ENCODE measurements at regions of chr21 and their contacts with region 1.

Region 1: DNA sequence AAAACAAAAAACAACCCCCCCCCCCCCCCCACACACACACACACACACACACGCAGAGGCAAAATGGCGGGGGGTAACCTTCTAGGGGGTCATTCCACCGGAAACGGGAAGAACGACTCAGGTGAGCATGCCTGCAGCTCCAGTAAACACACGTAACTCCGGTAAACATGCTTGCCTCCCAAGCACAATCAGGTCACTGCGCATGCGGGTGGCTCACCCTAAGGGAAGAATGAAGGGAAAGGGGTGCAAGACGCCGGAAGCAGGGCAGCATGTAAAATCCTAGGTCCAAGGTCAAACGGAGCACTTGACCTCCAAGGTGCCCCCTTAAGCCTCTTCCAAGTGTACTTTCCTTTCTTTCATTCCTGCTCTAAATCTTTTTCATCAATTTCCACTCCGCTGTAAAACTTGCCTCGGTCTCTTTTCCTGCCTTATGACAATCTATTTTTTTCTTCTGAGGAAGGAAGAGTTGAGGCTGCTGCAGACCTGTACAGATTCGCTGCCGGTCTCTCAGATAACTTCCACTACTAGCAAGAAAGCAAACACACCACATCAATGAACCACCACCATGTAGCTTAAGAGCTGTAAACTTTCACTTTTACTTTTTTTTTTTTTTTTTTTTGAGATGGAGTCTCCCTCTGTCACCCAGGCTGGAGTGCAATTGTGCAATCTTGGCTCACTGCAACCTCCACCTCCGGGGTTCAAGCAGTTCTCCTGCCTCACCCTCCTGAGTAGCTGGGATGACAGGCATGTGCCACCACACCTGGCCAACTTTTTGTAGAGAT is 21.0 kb upstream of the CBR3 start:
- DNase-seq: no peak
- H3K4me3 ChIP-seq: no peak overlapping the region
- H3K27me3 ChIP-seq: 0 out of 2 replicates have a peak, but pooled peaks cover 1% of the 10 kb centered on the region
- CTCF ChIP-seq: no peak

Region 2: DNA sequence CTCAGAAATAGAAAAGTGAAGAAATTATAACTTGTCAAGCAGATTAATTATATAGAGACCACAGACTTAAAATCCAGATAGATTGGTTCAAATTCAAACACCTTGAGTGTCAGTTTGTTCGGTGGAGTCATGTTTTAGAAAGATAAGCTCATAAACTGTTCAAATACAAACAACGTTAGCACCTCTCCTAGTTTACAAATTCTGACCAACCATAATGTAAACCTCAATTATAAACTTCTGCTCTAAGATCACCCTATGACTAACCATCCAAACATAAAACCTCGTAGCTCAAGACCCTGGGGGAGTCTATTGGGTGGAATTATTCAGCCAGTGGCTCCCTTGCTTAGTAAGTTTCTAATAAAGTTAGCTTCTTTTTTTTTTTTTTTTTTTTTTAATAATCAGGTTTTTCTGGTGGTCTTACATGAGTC is 31.6 kb before region 1 on chr21:
- CTCF ChIA-PET with region 1: interaction called, 3 read pairs
- POLR2A ChIA-PET with region 1: interaction called, 13 read pairs
- DNase-seq: no peak
- H3K4me3 ChIP-seq: no peak overlapping the region
- H3K27me3 ChIP-seq: no peaks in the 10 kb centered on the region
- CTCF ChIP-seq: no peak

Region 3: DNA sequence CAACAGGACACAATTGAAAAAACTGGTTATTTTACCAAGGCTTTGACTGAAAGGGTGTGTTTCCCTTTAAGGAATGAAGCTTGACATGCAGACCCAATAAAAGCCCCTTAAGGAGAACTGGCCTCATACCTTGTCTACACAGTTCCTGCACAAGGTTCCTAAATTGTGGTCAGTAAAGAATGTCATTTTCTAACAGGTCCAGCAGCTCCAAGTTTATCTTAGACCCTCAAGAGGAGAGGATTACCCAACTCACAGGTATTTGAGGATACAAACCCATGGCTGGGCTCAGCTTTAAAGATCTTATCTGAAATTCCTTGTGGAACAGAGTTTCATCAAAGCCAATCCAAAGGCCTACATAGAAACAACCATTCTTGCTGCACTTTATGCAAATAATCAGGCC is 10.4 kb before region 1 on chr21:
- CTCF ChIA-PET with region 1: interaction called, 13 read pairs
- POLR2A ChIA-PET with region 1: no interaction called
- DNase-seq: no peak
- H3K4me3 ChIP-seq: no peak overlapping the region
- H3K27me3 ChIP-seq: peaks cover 5% of the 10 kb centered on the region; the same call in 1 of the 2 replicates
- CTCF ChIP-seq: no peak

Region 4: DNA sequence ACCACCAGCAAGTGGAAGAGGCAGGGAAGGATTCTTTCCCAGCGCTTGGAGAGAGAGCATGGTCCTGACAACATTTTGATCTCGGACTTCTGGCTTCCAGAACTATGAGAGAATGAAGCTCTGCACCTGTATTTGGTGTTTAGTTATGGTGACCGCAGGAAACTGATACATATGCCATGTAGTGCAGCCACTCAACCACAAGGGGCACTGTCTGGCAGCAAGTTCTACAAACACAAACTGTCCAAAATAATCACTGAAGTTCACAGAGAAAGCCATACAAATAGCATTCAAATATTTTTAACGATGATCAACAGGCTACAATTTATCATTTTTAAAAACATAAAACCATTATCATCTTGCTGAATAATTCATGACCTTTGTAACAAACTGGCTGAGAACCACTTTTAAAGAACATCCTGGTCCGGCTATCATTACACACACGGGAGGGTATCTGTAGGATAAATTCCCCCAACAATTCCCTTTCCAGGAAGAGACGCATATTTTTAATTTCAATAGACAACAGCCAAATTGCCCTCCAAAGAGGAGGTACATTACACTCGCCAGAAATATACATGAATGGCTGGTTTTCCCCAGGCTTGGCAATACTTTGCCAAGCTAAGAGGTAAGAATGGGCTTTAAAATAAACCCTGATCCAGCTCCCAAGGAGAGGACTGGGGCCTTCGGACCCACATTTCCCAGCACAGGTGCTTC is 11.8 kb after region 1 on chr21:
- CTCF ChIA-PET with region 1: interaction called, 32 read pairs
- POLR2A ChIA-PET with region 1: no interaction called
- DNase-seq: no peak
- H3K4me3 ChIP-seq: no peak overlapping the region
- H3K27me3 ChIP-seq: no peaks in the 10 kb centered on the region
- CTCF ChIP-seq: peak; percentile 94

Region 5: GRCh38 chr21:36615274-36615964 is 501.6 kb after region 1 on chr21:
- CTCF ChIA-PET with region 1: no interaction called
- POLR2A ChIA-PET with region 1: no interaction called
- DNase-seq: no peak
- H3K4me3 ChIP-seq: no peak overlapping the region
- H3K27me3 ChIP-seq: peaks cover 13% of the 10 kb centered on the region
- CTCF ChIP-seq: no peak

Region 6: DNA sequence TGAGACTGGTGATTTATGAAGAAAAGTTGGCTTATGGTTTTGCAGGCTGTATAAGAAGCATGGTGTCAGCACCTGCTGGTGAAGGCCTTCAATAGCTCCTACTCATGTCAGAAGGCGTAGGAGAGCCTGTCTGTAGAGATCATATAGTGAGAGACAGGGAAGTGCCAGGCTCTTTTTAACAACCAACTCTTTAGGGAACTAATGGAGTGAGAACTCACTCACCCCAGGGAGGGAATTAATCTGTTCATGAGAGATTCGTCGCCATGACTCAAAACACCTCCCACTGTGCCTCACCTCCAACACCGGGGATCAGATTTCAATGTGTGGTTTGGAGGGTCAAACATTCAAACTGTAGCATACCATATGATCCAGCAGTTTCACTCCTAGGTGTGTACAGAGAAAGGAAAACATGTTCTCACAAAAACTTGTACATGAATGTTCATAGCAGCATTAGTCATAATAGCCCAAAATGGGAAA is 1031.8 kb after region 1 on chr21:
- CTCF ChIA-PET with region 1: no interaction called
- POLR2A ChIA-PET with region 1: no interaction called
- DNase-seq: no peak
- H3K4me3 ChIP-seq: no peak overlapping the region
- H3K27me3 ChIP-seq: no peaks in the 10 kb centered on the region
- CTCF ChIP-seq: no peak

Measured in BJ (cell line).